ENCODE measurements at regions of chr2 and their contacts with region 1.

Region 1: DNA sequence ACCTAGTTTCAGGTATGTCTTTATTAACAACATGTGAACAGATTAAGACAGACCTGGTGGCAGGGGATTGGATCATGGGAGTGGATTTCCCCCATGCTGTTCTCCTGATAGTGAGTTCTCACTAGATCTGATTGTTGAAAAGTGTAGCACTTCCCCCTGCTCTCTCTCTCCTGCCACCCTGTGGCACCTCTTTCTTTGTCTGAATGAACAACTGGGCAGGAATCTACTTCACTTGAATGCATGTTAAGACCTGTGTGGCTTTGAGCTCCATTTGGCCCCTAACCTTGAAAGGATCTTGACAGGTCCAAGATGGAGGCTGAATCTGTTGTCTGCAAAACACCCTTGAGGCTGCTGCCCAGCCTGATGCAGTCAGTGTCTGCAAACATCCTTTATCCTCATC is 194.4 kb downstream of the RNF144A start:
- DNase-seq: no peak
- ATAC-seq: no peak
- H3K4me3 Mint-ChIP-seq: no peak overlapping the region
- H3K27ac Mint-ChIP-seq: no peak overlapping the region
- H3K4me1 Mint-ChIP-seq: peaks cover 2% of the 10 kb centered on the region
- H3K27me3 Mint-ChIP-seq: no peaks in the 10 kb centered on the region

Region 2: DNA sequence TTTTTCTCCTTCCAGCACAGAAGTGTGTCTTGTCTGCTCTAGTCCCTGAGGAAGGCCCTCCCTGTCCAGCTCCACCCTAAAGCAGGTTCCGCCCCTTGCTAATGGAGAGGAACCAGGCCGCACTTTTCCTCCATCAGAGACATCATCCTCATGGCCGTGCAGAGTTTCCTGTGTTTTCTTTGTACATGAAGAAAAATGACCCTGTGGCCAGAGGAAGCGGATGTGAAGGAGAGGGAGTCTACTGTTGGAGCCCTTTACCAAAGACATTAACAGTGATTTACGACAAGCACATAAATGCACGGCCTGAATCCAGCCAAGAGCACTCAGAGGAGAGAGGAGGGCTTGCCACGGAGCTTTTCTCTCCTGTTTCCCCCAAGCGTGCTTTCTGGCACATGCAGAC is 84.9 kb before region 1 on chr2:
- CTCF ChIA-PET with region 1: no interaction called
- DNase-seq: no peak
- ATAC-seq: no peak
- H3K4me3 Mint-ChIP-seq: no peak overlapping the region
- H3K27ac Mint-ChIP-seq: no peak overlapping the region
- H3K4me1 Mint-ChIP-seq: no peaks in the 10 kb centered on the region
- H3K27me3 Mint-ChIP-seq: no peaks in the 10 kb centered on the region

Region 3: DNA sequence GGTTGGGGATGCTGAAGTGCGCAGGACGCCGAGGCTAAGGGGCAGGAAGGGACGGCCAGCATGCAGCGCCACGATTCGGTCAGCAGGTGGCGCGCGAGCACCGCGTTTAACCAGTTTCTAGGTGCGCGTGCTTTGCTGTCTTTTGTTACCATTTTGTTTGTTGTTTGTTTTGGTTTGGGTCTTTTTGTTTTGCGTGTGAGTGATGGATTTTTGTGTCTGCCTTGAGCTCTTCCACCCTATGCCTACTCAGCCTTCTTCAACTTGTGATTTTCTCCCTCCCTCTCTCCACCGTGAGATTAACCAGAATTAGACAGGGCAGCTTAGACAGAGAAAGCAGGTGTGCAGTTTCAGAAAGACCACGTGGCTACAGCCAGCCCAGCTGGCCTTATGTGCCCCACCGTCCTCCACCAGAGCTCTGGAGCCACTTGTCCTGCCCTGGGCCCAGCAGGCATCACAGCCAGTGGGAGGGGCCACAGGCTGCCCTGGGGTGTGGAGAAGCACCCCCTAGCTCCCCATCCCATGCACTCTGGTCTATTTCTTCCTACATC is 14.2 kb before region 1 on chr2:
- CTCF ChIA-PET with region 1: interaction called, 19 read pairs
- DNase-seq: peak; percentile 82
- ATAC-seq: peak; percentile 97
- H3K4me3 Mint-ChIP-seq: peak overlapping the region; percentile 57
- H3K27ac Mint-ChIP-seq: peak overlapping the region; percentile 0
- H3K4me1 Mint-ChIP-seq: peaks cover 8% of the 10 kb centered on the region
- H3K27me3 Mint-ChIP-seq: no peaks in the 10 kb centered on the region